ENCODE measurements at regions of chr14 and their contacts with region 1.

Region 1: GRCh38 chr14:37411079-37411735 is 183.8 kb downstream of the FOXA1 start:
- DNase-seq: no peak
- H3K4me3 ChIP-seq: no peak overlapping the region
- H3K4me3 Mint-ChIP-seq: no peak overlapping the region
- H3K27ac Mint-ChIP-seq: no peak overlapping the region
- H3K4me1 ChIP-seq: peaks cover 51% of the 10 kb centered on the region
- H3K4me1 Mint-ChIP-seq: peaks cover 21% of the 10 kb centered on the region
- H3K27me3 ChIP-seq: no peaks in the 10 kb centered on the region
- H3K27me3 Mint-ChIP-seq: no peaks in the 10 kb centered on the region
- CTCF ChIP-seq: no peak

Region 2: GRCh38 chr14:37253905-37254304 is 157.3 kb before region 1 on chr14:
- CTCF ChIA-PET with region 1: no interaction called
- POLR2A ChIA-PET with region 1: no interaction called
- intact Hi-C with region 1: loop called (anchors 5 kb)
- DNase-seq: no peak
- H3K4me3 ChIP-seq: no peak overlapping the region
- H3K4me3 Mint-ChIP-seq: no peak overlapping the region
- H3K27ac Mint-ChIP-seq: no peak overlapping the region
- H3K4me1 ChIP-seq: peaks cover 35% of the 10 kb centered on the region
- H3K4me1 Mint-ChIP-seq: peaks cover 18% of the 10 kb centered on the region
- H3K27me3 ChIP-seq: no peaks in the 10 kb centered on the region
- H3K27me3 Mint-ChIP-seq: no peaks in the 10 kb centered on the region
- CTCF ChIP-seq: no peak

Region 3: DNA sequence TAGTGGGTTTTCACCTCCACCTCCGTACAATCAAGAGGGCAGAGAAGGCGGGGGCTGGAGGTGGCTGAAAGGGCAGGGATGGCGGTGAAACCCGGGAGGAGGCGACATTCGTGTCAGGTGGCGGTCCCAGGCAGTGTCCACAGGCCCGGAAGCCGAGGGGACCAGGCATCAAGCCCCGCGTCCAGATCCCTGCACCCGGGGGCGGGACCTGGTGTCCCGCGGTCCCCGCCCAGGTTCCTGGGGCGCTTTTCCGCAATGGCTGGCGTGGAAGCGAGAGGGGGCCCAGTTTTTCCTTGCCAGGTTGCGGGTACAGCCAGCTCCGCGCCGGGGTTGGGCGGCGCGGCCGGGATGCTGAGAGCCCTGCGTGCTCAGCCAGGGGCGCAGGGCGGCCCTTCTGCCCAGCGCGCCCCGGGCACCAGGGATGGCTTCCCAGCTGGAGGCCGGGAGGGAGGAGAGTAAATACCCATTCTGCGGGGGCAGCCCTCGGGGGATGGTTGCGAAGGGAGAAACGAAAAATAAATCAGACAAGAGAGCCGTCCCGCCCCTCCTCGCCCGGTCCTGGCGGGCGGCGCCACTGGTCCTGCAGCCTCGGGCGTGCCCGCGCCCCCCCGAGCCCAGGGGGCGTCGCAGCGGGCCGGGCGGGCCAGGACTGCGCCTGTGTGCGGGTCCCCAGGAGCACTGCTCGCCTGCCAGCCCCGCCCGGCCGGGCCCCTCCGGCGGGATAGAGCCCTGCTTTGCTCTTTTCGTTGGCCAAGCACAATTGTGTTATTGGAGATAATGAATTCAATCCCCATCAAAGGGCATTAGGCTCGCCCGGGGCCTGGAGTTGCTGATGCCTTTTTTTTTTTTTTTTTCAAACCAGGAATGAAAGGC is 172.4 kb after region 1 on chr14:
- CTCF ChIA-PET with region 1: no interaction called
- POLR2A ChIA-PET with region 1: no interaction called
- intact Hi-C with region 1: loop called (anchors 2 kb)
- DNase-seq: peak; percentile 92
- H3K4me3 ChIP-seq: peak overlapping the region; percentile 72
- H3K4me3 Mint-ChIP-seq: peak overlapping the region; percentile 78
- H3K27ac Mint-ChIP-seq: peak overlapping the region; percentile 97
- H3K4me1 ChIP-seq: peaks cover 32% of the 10 kb centered on the region
- H3K4me1 Mint-ChIP-seq: peaks cover 23% of the 10 kb centered on the region
- H3K27me3 ChIP-seq: no peaks in the 10 kb centered on the region
- H3K27me3 Mint-ChIP-seq: no peaks in the 10 kb centered on the region
- CTCF ChIP-seq: peak in 1 of 2 experiments; percentile 3

Measured in Caco-2 (cell line).